Right ventricle myocardium superior (tissue), 1 donor: ENCODE measurements at regions of chr17 and their contacts with region 1.

Region 1: DNA sequence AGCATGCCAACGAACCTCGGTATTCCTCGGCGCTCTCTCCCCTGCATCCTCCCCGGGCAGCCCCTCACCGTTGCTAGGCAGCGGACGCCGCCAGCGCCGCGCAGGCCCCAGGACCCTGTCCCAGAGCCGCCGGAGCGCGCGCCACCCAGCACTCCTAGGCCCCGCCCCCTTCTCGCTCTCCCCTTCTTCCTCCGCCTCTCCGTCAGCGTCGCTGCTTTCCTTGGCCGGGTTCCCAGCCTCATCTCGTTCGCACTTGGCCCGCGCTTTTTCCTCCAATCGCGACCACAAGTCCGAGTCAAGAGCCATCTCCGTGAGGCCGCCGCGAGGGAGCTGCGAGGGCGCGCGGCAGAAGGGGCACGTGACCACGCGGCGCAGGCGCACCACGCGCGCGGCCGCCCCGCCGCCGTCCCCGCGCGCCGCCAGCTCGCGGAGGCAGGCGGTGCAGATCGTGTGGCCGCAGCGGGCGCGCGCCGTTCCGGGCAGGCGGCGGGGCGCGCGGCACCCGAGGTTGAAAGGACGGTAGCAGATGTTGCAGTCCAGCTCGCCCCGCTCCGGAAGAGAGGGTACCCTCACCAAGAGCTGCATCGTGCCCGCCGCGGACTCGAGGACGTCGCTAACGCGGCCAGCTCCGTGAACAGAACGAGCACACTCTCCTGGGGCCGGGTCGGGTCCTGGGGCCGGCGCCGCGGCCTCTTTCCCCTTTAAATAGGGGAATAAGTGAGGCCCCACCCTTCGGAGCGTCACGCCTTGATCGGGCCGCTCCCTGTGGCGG is at the start of gene RNF227:
- DNase-seq: peak; percentile 95
- ATAC-seq: peak; percentile 94
- total RNA-seq, gene RNF227: 0.78 TPM

Region 2: DNA sequence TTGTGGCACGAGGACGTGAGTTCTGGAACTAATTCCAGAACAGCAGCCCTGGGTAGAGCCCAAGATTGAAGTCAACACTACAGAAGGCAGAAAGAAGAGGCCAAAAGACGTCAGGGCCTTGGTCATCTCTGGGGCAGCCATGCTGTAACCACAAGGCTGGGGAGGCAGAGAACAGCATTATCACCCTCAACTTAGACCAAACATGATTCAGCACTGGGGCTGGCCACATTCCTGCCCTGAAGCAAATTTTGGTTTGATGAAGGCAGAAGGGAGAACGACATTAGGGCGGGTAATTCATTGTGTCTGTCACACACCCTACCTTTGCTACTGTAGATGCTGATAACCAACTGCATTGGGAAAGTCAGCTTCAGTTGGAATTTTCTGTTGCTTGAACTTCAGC is 113.3 kb after region 1 on chr17:
- intact Hi-C with region 1: no loop called
- DNase-seq: no peak
- ATAC-seq: no peak

Region 3: GRCh38 chr17:8041249-8041928 is 125.6 kb after region 1 on chr17:
- intact Hi-C with region 1: loop called (anchors 5 kb)
- DNase-seq: no peak
- ATAC-seq: peak; percentile 87